Mammary epithelial cell (primary cell): ENCODE measurements at regions of chr2 and their contacts with region 1.

Region 1: DNA sequence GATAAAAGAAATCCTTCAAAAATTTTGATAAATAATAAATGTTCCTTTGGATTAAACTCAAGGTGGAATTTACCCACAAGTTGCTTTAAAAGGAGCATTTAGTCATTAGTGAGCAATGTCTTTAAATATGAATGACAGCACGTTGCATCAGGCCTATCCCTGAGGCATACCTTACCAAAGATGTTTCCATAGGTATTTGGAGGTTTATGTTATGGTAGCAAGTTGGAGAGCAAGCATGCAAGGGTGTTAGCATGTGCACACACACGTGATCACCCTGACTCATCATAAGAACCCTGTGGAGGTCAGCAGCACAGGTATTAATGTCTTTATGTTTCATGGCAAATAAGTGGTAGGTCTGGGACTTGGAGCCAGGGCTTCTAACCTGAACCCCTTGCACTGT is 159.9 kb downstream of the ACTR3 start:
- DNase-seq: peak; percentile 76
- H3K4me3 ChIP-seq: no peak overlapping the region
- H3K27ac ChIP-seq: no peak overlapping the region
- H3K4me1 ChIP-seq: peaks cover 13% of the 10 kb centered on the region
- H3K27me3 ChIP-seq: no peaks in the 10 kb centered on the region
- CTCF ChIP-seq: no peak

Region 2: GRCh38 chr2:113962692-113963480 is 86.9 kb before region 1 on chr2:
- CTCF ChIA-PET with region 1: no interaction called
- dilution Hi-C with region 1: no loop called
- in situ Hi-C with region 1: no loop called
- intact Hi-C with region 1: no loop called
- DNase-seq: peak; percentile 39
- H3K4me3 ChIP-seq: no peak overlapping the region
- H3K27ac ChIP-seq: peak overlapping the region; percentile 21
- H3K4me1 ChIP-seq: no peaks in the 10 kb centered on the region
- H3K27me3 ChIP-seq: no peaks in the 10 kb centered on the region
- CTCF ChIP-seq: no peak

Region 3: GRCh38 chr2:114022360-114023085 is 27.3 kb before region 1 on chr2:
- CTCF ChIA-PET with region 1: no interaction called
- dilution Hi-C with region 1: no loop called
- in situ Hi-C with region 1: no loop called
- intact Hi-C with region 1: loop called (anchors 2 kb)
- DNase-seq: peak; percentile 94
- H3K4me3 ChIP-seq: no peak overlapping the region
- H3K27ac ChIP-seq: peak overlapping the region; percentile 66
- H3K4me1 ChIP-seq: peaks cover 16% of the 10 kb centered on the region
- H3K27me3 ChIP-seq: no peaks in the 10 kb centered on the region
- CTCF ChIP-seq: no peak